Transverse colon (tissue), 4 donors: ENCODE measurements at regions of chr4 and their contacts with region 1.

Region 1: GRCh38 chr4:38730830-38731646 is 51.8 kb downstream of the TLR10 start:
- DNase-seq: peak; percentile 88
- H3K4me3 ChIP-seq: no peak overlapping the region
- H3K27ac ChIP-seq: peak overlapping the region in 3 of 4 donors; percentile 10 to 80 (median 75)
- H3K4me1 ChIP-seq: peaks cover 11 to 30% (median 19%) of the 10 kb centered on the region in 4 donors
- H3K27me3 ChIP-seq: no peaks in the 10 kb centered on the region
- CTCF ChIP-seq: peak; percentile 96 to 97 (median 97)
- EP300 ChIP-seq: no peak
- POLR2A ChIP-seq: no peak

Region 2: DNA sequence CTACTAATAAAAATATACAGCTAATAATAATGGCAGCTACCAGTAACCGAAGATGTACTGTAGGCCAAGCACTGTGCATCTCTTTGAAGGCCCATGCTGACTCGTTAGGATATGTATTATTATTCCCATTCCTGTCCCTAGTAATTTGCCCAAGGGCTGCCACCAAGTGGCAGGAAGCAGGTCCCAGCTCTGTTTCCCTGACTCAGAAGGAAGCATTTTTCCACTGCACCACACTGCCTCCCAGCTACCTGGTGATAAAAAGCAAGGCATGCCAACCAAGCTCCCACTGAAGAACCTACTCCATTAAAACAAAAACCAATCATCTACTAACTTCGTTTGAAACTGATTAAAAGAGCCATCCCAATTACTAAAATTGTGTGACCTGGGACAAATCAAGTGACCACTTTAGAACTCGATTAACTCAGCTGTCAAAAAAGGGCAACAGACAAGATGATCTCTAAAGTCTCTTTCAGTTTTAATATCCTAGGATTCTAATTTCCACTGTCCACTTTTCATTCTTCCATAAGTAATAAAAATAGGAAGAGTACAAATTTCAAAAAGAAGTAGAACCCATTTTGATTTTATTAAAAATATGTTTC is 928.9 kb before region 1 on chr4:
- in situ Hi-C with region 1: loop called in 1 of 4 experiments (anchors 25 kb)
- intact Hi-C with region 1: no loop called
- DNase-seq: peak; percentile 68
- H3K4me3 ChIP-seq: no peak overlapping the region
- H3K27ac ChIP-seq: no peak overlapping the region
- H3K4me1 ChIP-seq: no peaks in the 10 kb centered on the region
- H3K27me3 ChIP-seq: no peaks in the 10 kb centered on the region
- CTCF ChIP-seq: peak; percentile 39 to 88 (median 56)
- EP300 ChIP-seq: no peak
- POLR2A ChIP-seq: no peak

Region 3: GRCh38 chr4:38062088-38062893 is 668.7 kb before region 1 on chr4:
- in situ Hi-C with region 1: loop called (anchors 5 to 25 kb)
- intact Hi-C with region 1: no loop called
- DNase-seq: peak; percentile 89
- H3K4me3 ChIP-seq: peak overlapping the region in 3 of 4 donors; percentile 12 to 46 (median 31)
- H3K27ac ChIP-seq: peak overlapping the region; percentile 72 to 80 (median 78)
- H3K4me1 ChIP-seq: peaks cover 0 to 26% (median 8%) of the 10 kb centered on the region in 4 donors
- H3K27me3 ChIP-seq: no peaks in the 10 kb centered on the region
- CTCF ChIP-seq: peak; percentile 82 to 91 (median 89)
- EP300 ChIP-seq: no peak
- POLR2A ChIP-seq: no peak

Region 4: DNA sequence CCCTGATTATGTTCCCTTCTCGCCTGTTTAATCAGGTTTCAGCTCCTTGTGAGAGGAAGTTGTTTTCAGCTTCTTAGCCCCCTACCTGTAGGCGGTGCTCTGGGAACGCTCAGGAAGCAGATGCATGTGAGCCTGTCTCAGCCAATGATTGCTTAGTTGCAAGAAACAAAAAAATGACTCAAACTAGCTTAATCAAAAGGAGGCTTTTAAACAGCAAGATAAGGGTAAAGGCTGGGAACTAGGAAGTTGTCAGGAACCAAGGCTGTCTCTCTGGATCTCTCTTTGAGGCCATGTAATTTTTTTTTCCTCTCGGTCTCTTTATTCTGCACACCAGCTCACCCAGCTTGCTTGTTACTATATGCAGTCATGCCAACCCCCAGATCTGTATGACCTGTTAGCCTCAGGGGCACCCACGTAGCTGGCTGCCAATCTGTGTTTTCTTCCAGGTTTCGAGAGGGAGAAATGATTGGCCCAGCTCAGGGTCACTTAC is 661.7 kb before region 1 on chr4:
- in situ Hi-C with region 1: loop called (anchors 5 to 25 kb)
- intact Hi-C with region 1: no loop called
- DNase-seq: peak; percentile 72
- H3K4me3 ChIP-seq: no peak overlapping the region
- H3K27ac ChIP-seq: peak overlapping the region; percentile 6 to 59 (median 55)
- H3K4me1 ChIP-seq: peaks cover 6 to 31% (median 19%) of the 10 kb centered on the region in 4 donors
- H3K27me3 ChIP-seq: no peaks in the 10 kb centered on the region
- CTCF ChIP-seq: peak; percentile 11 to 79 (median 46)
- EP300 ChIP-seq: no peak
- POLR2A ChIP-seq: no peak

Region 5: GRCh38 chr4:38179690-38180377 is 551.2 kb before region 1 on chr4:
- in situ Hi-C with region 1: loop called (anchors 5 to 10 kb)
- intact Hi-C with region 1: loop called (anchors 1 kb)
- DNase-seq: peak; percentile 88
- H3K4me3 ChIP-seq: no peak overlapping the region
- H3K27ac ChIP-seq: peak overlapping the region; percentile 36 to 65 (median 52)
- H3K4me1 ChIP-seq: peaks cover 5 to 32% (median 16%) of the 10 kb centered on the region in 4 donors
- H3K27me3 ChIP-seq: no peaks in the 10 kb centered on the region
- CTCF ChIP-seq: peak; percentile 90 to 97 (median 94)
- EP300 ChIP-seq: no peak
- POLR2A ChIP-seq: no peak